Caco-2 (cell line): ENCODE measurements at regions of chr16 and their contacts with region 1.

Region 1: DNA sequence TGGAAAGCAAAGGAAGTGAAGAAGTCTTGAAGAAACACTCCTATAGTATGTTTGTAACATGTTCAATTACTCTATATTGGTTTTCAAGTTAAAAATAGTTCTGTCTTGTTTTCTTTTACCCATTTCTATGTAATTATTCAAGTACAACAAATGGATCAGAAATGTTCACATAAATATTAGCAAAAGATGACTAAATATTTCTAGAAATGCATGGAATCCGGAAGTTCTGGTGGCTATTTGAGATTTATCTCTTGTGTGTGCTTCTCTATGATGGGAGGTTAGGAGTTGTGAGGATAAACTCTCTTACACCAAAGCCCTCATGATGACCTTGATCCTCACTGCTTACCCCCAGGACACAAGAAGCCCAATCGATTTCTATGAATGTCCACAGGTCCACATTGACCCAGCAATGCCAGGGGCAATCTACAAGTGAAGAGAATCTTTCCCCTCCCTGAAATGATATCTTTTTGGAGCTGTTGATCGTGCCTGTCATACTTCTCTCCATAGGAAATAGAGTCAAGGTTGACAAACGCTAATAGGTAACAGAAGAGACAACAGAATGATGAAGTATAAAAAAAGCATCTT is 237.4 kb downstream of the CDH8 start:
- DNase-seq: no peak
- H3K4me3 ChIP-seq: no peak overlapping the region
- H3K4me3 Mint-ChIP-seq: no peak overlapping the region
- H3K27ac Mint-ChIP-seq: no peak overlapping the region
- H3K4me1 ChIP-seq: peaks cover 32% of the 10 kb centered on the region
- H3K4me1 Mint-ChIP-seq: peaks cover 26% of the 10 kb centered on the region
- H3K27me3 ChIP-seq: no peaks in the 10 kb centered on the region
- H3K27me3 Mint-ChIP-seq: no peaks in the 10 kb centered on the region
- CTCF ChIP-seq: no peak

Region 2: DNA sequence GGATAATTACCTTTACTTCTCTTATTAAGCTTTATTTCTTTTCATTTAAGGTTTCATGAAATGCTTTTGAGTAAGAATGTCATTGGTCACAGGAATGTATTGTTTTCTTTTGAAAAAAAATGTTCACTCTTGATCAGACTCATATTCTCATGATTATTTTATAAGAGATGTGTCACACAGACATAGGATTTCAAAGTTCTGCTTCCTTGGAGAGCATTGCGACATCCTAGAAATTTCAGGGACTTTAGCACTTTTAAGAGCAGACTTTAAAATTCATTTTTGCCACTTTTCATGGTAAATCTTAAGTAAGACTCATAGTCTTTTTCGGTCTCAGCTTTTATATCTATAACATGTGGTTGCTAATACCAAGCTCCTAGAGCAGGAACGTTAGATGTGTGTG is 77.3 kb before region 1 on chr16:
- CTCF ChIA-PET with region 1: no interaction called
- POLR2A ChIA-PET with region 1: no interaction called
- intact Hi-C with region 1: no loop called
- DNase-seq: no peak
- H3K4me3 ChIP-seq: no peak overlapping the region
- H3K4me3 Mint-ChIP-seq: no peak overlapping the region
- H3K27ac Mint-ChIP-seq: no peak overlapping the region
- H3K4me1 ChIP-seq: no peaks in the 10 kb centered on the region
- H3K4me1 Mint-ChIP-seq: no peaks in the 10 kb centered on the region
- H3K27me3 ChIP-seq: no peaks in the 10 kb centered on the region
- H3K27me3 Mint-ChIP-seq: peaks cover 5% of the 10 kb centered on the region
- CTCF ChIP-seq: no peak

Region 3: GRCh38 chr16:61829631-61830030 is 30.8 kb after region 1 on chr16:
- CTCF ChIA-PET with region 1: no interaction called
- POLR2A ChIA-PET with region 1: no interaction called
- intact Hi-C with region 1: no loop called
- DNase-seq: no peak
- H3K4me3 ChIP-seq: no peak overlapping the region
- H3K4me3 Mint-ChIP-seq: no peak overlapping the region
- H3K27ac Mint-ChIP-seq: no peak overlapping the region
- H3K4me1 ChIP-seq: no peaks in the 10 kb centered on the region
- H3K4me1 Mint-ChIP-seq: no peaks in the 10 kb centered on the region
- H3K27me3 ChIP-seq: no peaks in the 10 kb centered on the region
- H3K27me3 Mint-ChIP-seq: no peaks in the 10 kb centered on the region
- CTCF ChIP-seq: no peak

Region 4: DNA sequence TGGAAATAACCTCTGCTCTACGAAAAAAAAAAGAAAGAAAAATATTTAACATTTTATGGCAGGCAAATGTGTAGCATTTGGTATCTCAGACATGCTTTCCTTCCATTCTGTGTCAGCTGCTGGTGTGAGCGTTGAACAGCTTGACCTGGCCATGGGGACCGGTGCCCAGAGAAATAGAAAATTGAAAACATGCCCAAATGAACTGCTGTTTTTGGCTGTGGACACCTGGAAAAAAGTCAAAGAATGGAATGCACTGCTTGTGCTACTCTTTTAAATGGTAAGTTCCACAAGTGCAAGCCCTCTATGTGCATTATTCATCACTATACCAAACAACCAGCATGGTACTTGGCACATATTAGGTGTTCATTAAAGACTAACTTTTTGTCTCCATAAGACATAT is 110.2 kb after region 1 on chr16:
- CTCF ChIA-PET with region 1: no interaction called
- POLR2A ChIA-PET with region 1: no interaction called
- intact Hi-C with region 1: loop called (anchors 5 kb)
- DNase-seq: no peak
- H3K4me3 ChIP-seq: no peak overlapping the region
- H3K4me3 Mint-ChIP-seq: no peak overlapping the region
- H3K27ac Mint-ChIP-seq: no peak overlapping the region
- H3K4me1 ChIP-seq: peaks cover 18% of the 10 kb centered on the region
- H3K4me1 Mint-ChIP-seq: peaks cover 11% of the 10 kb centered on the region
- H3K27me3 ChIP-seq: no peaks in the 10 kb centered on the region
- H3K27me3 Mint-ChIP-seq: no peaks in the 10 kb centered on the region
- CTCF ChIP-seq: no peak